ENCODE measurements at regions of chr11 and their contacts with region 1.

Region 1: DNA sequence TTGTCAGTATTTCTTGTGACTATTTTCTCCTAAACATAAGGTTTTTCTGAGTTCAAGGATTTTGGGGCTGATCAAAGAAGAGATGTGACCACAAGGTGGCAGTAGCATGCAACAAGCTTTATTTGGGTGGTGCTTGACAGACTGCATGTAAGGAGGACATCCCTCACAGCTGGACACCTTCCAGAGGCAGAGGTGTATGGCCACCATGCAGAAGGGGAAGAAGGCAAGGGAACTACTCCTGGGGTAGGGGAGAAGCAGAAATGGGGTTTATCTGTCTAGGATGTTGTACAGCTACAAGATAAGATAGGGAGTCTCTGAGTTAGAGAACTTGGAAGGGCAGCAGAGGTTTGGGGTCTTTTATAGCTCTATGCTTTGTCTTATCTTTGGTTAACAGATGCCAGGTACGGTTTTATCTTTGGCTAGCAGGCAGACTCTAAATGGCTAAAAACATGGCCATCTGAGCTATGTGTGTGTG is 5.1 kb upstream of the BIRC2 start:
- DNase-seq: peak; percentile 54
- CTCF ChIP-seq: peak; percentile 73

Region 2: GRCh38 chr11:102287964-102288724 is 53.7 kb before region 1 on chr11:
- CTCF ChIA-PET with region 1: interaction called, 50 read pairs
- POLR2A ChIA-PET with region 1: no interaction called
- DNase-seq: peak; percentile 80
- CTCF ChIP-seq: peak; percentile 70

Region 3: DNA sequence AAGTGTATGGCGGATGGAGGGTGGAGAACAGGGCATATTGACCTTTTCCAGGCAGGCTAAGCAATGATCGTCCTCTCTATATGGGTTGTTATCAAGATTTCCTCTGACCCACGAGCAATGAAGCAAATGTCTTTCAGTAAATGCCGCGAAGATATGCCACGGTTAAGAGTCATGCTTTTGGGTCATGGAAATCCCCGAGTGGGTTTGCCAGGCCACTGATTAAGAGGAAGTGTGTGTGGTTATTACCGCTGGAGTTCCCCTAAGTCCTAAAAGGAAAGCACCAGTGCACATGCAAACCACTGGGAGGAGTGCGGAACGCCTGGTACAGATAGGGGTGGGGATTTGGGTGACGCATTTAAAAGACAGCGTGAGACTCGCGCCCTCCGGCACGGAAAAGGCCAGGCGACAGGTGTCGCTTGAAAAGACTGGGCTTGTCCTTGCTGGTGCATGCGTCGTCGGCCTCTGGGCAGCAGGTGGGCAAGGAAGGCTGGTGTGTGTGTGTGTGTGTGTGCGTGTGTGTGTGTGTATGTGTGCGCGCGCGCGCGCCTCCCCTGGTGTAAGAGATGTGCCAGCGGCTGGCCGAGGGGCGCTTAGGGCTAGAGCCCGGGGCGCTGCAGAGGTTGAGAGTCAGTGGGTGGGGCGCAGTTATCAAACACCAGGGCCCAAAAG is 24.6 kb before region 1 on chr11 and contains the start of gene BIRC3:
- CTCF ChIA-PET with region 1: interaction called, 27 read pairs
- POLR2A ChIA-PET with region 1: no interaction called
- DNase-seq: peak; percentile 84
- CTCF ChIP-seq: peak; percentile 8

Region 4: DNA sequence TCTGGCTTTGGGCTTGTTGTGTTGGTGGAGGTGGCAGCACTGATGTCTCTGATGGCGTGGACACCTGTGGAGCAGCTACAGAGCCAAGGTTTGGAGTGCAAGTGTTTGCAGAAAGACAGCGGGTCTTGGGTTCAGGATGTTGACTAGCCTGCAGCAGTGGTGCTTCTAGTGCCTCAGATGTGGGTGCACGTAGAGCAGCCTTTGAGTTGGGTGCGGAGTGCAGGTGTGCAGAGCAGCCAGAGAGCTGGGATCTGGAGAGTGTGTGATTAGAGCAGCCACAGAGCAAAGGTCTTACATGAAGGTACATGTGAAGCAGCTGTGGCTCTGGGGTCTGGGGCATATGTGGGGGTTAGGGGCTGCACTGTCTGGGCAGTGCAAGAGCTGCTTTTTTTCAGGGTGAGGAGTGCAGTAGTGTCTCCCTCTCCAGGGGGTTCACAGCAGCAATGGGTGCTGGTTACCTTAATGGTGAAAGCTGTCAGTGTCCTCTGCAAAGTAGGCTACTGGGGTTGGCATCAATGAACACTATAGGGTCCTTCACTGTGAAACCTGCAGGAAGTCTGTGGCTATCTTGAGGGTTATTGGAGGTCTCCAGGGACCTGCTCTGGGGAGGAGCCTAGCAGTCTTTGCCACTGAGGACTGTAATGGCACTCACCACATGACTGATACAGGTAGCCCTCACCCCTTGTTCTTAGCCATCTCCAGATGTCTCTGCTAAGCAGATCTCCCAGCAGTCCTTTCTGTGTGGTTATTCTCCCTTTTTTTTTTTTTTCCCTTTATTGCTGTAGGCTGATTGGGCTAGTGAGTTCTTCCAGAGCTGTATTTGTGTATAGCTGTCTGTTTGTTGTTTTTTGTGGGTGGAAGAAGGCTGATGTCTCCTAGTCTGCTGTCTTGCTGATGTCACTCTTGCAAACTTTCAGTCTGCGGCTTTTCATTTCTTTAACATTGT is 19.5 kb after region 1 on chr11:
- CTCF ChIA-PET with region 1: interaction called, 10 read pairs
- POLR2A ChIA-PET with region 1: no interaction called
- DNase-seq: no peak
- CTCF ChIP-seq: no peak

Region 5: GRCh38 chr11:102384419-102385079 is 42.7 kb after region 1 on chr11:
- CTCF ChIA-PET with region 1: no interaction called
- POLR2A ChIA-PET with region 1: no interaction called
- DNase-seq: no peak
- CTCF ChIP-seq: no peak

Region 6: GRCh38 chr11:102522312-102523188 is 180.7 kb after region 1 on chr11:
- CTCF ChIA-PET with region 1: interaction called, 13 read pairs
- POLR2A ChIA-PET with region 1: no interaction called
- DNase-seq: no peak
- CTCF ChIP-seq: no peak

Region 7: GRCh38 chr11:102604877-102605276 is 263.0 kb after region 1 on chr11:
- CTCF ChIA-PET with region 1: interaction called, 213 read pairs
- POLR2A ChIA-PET with region 1: no interaction called
- DNase-seq: no peak
- CTCF ChIP-seq: no peak

Measured in GM10248 (cell line).